A673 (cell line): ENCODE measurements at regions of chr1 and their contacts with region 1.

Region 1: GRCh38 chr1:150486964-150487762 is at the start of gene TARS2:
- DNase-seq: peak; percentile 99
- H3K4me3 ChIP-seq: peak within 1 kb of the TSS; percentile 93
- H3K27ac ChIP-seq: peak within 1 kb of the TSS; percentile 68
- H3K4me1 ChIP-seq: peaks cover 5% of the 10 kb centered on the region
- H3K27me3 ChIP-seq: no peaks in the 10 kb centered on the region
- CTCF ChIP-seq: 0 out of 2 replicates have a peak, but pooled peaks have one; percentile 8
- total RNA-seq, gene TARS2: 32.0 and 36.6 TPM in 2 replicates

Region 2: DNA sequence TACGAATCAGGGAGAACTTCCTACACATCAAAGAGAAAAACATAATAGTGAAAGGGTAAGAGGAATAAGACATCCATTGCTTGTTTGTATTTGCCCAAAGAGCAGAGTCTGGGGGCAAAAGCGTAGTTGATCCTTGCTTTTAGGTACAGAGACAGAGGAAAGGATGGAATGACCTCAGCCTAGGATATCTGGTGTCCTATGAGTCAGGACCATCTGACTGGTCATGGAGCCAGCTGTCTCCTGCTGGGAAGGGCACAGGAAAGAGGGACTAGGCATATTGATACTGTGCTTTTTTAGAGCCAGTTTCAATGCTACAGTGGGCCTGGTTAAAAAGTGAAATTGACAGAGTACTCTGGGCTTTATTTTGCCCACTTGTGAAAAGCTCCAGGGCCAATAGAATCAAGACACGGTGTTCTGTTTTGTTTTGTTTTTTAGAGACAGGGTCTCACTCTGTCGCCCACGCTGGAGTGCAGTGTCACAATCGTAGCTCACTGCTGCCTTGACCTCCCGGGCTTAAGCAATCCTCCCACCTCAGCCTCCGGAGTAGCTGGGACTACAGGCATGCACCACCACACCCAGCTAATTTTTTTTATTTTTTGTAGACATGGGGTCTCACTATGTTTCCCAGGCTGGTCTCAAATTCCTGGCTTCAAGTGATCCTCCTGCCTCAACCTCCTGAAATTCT is 334.2 kb before region 1 on chr1:
- CTCF ChIA-PET with region 1: no interaction called
- POLR2A ChIA-PET with region 1: no interaction called
- intact Hi-C with region 1: no loop called
- DNase-seq: no peak
- H3K4me3 ChIP-seq: no peak overlapping the region
- H3K27ac ChIP-seq: no peak overlapping the region
- H3K4me1 ChIP-seq: peaks cover 23% of the 10 kb centered on the region
- H3K27me3 ChIP-seq: no peaks in the 10 kb centered on the region
- CTCF ChIP-seq: no peak

Region 3: GRCh38 chr1:150363426-150364230 is 123.5 kb before region 1 on chr1 and contains the start of gene RPRD2:
- CTCF ChIA-PET with region 1: no interaction called
- POLR2A ChIA-PET with region 1: no interaction called
- intact Hi-C with region 1: loop called (anchors 1 kb)
- DNase-seq: peak; percentile 100
- H3K4me3 ChIP-seq: peak within 1 kb of the TSS; percentile 75
- H3K27ac ChIP-seq: peak within 1 kb of the TSS; percentile 97
- H3K4me1 ChIP-seq: peaks cover 15% of the 10 kb centered on the region
- H3K27me3 ChIP-seq: no peaks in the 10 kb centered on the region
- CTCF ChIP-seq: no peak
- total RNA-seq, gene RPRD2: 44.5 and 46.6 TPM in 2 replicates

Region 4: GRCh38 chr1:150473659-150474058 is 13.5 kb before region 1 on chr1:
- CTCF ChIA-PET with region 1: no interaction called
- POLR2A ChIA-PET with region 1: no interaction called
- intact Hi-C with region 1: no loop called
- DNase-seq: no peak
- H3K4me3 ChIP-seq: no peak overlapping the region
- H3K27ac ChIP-seq: no peak overlapping the region
- H3K4me1 ChIP-seq: no peaks in the 10 kb centered on the region
- H3K27me3 ChIP-seq: no peaks in the 10 kb centered on the region
- CTCF ChIP-seq: no peak

Region 5: GRCh38 chr1:150498342-150498741 is 11.2 kb after region 1 on chr1:
- CTCF ChIA-PET with region 1: no interaction called
- POLR2A ChIA-PET with region 1: no interaction called
- intact Hi-C with region 1: no loop called
- DNase-seq: no peak
- H3K4me3 ChIP-seq: no peak overlapping the region
- H3K27ac ChIP-seq: no peak overlapping the region
- H3K4me1 ChIP-seq: no peaks in the 10 kb centered on the region
- H3K27me3 ChIP-seq: no peaks in the 10 kb centered on the region
- CTCF ChIP-seq: no peak